ENCODE measurements at regions of chr15 and their contacts with region 1.

Region 1: DNA sequence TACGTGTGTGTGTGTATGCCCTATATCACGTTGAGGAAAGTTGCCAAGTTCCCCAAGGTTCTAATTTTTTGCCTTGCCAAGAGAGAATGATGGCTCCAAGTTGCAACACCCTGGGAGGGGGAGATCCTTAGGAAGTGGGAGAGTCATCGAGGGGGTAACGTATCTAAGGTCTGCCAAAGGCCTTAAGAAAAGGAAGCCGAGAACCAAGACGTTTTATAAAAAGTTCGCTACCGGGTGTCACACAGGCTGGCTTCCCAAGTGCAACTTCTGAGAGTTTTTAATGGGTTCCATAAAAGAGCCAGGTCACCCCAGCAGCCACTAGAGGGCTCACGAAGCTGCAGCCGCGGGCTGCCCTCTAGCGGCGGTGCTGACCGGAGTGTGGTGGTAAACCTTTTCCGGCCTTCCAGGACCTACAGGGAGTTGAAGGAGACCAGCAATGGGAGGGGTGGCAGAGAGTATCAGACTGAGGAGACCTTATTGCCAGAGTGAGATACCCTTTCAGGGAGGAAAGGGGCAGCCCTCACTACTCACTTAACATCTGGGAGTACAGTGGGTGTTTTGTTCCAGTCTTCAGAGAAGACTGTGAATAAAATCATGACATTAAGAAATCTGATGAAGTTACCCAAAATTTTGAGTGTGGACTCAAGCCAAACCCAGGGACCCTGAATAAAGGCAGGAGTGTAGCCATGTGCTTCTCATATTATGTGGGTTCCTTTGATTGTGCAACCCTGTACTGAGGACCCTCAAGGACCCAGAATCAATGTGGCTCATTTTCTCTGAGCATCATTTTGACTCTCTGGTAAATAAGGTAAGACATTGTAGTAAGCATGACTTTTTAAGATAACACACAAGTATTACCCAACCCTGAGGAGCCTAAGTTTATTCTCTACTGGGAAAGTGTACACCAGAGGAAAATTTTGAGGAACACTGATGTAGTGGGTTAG is 2.5 kb upstream of the RFX7 start:
- DNase-seq: peak; percentile 41
- H3K4me3 ChIP-seq: peak overlapping the region; percentile 39
- CTCF ChIP-seq: peak; percentile 100

Region 2: GRCh38 chr15:56098195-56098863 is 147.8 kb before region 1 on chr15:
- CTCF ChIA-PET with region 1: interaction called, 10 read pairs
- POLR2A ChIA-PET with region 1: no interaction called
- DNase-seq: no peak
- H3K4me3 ChIP-seq: no peak overlapping the region
- CTCF ChIP-seq: no peak

Region 3: GRCh38 chr15:56199038-56199437 is 47.1 kb before region 1 on chr15:
- CTCF ChIA-PET with region 1: interaction called, 10 read pairs
- POLR2A ChIA-PET with region 1: no interaction called
- DNase-seq: no peak
- H3K4me3 ChIP-seq: no peak overlapping the region
- CTCF ChIP-seq: no peak

Region 4: GRCh38 chr15:56232058-56232457 is 14.1 kb before region 1 on chr15:
- CTCF ChIA-PET with region 1: interaction called, 21 read pairs
- POLR2A ChIA-PET with region 1: no interaction called
- DNase-seq: no peak
- H3K4me3 ChIP-seq: no peak overlapping the region
- CTCF ChIP-seq: no peak

Region 5: GRCh38 chr15:56261854-56262509 is 15.8 kb after region 1 on chr15:
- CTCF ChIA-PET with region 1: interaction called, 19 read pairs
- POLR2A ChIA-PET with region 1: no interaction called
- DNase-seq: no peak
- H3K4me3 ChIP-seq: no peak overlapping the region
- CTCF ChIP-seq: no peak

Region 6: DNA sequence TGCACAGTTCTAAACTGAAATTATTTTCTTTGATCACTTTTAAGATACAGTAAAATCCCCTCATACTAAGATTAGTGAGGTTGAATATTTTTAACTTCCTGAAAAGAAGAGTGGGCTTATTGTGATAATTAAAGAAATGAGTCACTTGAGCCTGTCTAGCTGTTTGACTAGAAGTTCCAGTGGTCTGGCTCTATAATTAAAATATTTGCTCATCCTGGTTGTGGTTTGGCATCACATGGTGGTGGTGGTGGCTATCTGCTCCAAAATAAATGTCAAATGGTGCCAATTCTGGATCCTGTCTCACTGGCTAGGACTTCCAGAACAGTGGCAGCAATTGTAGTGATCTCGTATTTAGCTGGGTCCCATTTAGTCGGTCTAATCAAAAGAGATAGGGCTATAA is 110.5 kb after region 1 on chr15:
- CTCF ChIA-PET with region 1: no interaction called
- POLR2A ChIA-PET with region 1: no interaction called
- DNase-seq: no peak
- H3K4me3 ChIP-seq: no peak overlapping the region
- CTCF ChIP-seq: no peak

Region 7: DNA sequence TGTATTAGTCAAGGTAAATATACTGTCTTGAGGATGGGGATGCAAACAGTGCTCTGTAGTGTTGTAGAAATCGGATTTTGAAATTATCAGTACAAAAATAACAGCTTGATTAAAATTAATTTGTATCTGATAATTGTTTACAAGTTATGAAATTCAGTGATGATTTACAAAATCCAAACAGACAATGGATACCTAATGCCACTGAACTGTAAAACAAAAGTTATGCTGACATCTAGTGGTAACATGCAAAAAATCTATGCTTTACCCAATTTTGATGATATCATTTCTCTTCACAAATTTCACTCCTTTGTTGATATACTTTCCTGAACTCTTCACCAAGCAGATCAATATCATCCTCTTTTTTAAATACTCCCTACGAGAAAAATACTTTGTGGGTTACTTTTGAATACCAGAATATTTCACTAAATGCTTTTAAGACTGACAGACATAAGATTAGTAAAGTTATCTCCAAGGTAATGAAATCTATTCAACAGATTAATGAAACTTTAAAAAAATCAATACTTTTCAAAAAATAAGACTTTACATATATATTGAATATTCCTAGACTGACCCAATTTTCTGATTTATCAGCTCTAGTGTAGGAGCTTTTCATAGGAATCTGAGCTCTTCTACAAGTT is 182.8 kb after region 1 on chr15:
- CTCF ChIA-PET with region 1: interaction called, 109 read pairs
- POLR2A ChIA-PET with region 1: no interaction called
- DNase-seq: no peak
- H3K4me3 ChIP-seq: no peak overlapping the region
- CTCF ChIP-seq: peak; percentile 42

Measured in AG04449 (cell line).